ENCODE measurements at regions of chr5 and their contacts with region 1.

Region 1: GRCh38 chr5:132064738-132065331 is 4.4 kb downstream of the IL3 start:
- DNase-seq: peak; percentile 70 to 81 (median 73)
- H3K4me3 ChIP-seq: no peak overlapping the region
- H3K27ac ChIP-seq: no peak overlapping the region
- H3K4me1 ChIP-seq: peaks cover 0 to 11% (median 2%) of the 10 kb centered on the region in 4 experiments
- H3K27me3 ChIP-seq: peaks cover 0 to 3% (median 0%) of the 10 kb centered on the region in 5 experiments

Region 2: DNA sequence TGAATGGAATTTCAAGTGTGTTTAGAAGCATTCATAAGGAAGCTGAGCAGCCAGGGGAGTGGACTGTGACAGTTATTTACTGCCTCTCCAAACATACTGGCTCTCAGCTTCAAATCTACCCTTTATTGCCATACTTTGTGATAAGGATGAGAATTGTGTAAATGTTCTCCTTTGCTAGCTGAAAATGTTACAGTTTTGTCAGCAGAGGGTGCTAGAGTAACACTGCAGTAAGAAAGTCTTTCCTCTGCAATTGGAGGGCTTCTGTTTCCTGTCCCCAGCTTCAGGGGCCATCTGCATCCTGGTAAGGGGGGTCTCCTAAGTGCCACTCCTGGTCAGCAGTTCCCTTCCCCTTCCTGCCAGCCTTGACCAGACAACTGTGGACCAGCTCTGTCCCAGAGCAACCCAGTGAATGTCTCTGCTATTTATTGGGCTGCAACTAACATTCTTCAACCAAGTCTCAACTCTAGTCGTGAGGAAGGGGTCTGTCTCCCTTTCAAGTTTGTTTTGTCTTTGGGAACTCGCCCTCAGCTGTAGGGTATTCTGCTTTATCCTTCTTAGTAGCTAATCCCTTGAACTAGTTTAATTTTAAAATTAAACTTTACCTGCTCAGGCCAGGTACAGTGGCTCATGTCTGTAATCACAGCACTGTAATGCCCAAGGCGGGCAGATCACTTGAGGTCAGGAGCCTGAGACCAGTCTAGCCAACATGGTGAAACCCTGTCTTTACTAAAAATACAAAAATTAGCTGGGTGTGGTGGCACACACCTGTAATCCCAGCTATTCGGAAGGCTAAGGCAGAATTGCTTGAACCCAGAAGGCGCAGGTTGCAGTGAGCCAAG is 475.1 kb before region 1 on chr5:
- CTCF ChIA-PET with region 1: interaction called, 34 read pairs
- POLR2A ChIA-PET with region 1: no interaction called
- DNase-seq: peak; percentile 72 to 86 (median 84)
- H3K4me3 ChIP-seq: no peak overlapping the region
- H3K27ac ChIP-seq: no peak overlapping the region
- H3K4me1 ChIP-seq: peaks cover 4 to 23% (median 15%) of the 10 kb centered on the region in 4 experiments
- H3K27me3 ChIP-seq: no peaks in the 10 kb centered on the region

Region 3: DNA sequence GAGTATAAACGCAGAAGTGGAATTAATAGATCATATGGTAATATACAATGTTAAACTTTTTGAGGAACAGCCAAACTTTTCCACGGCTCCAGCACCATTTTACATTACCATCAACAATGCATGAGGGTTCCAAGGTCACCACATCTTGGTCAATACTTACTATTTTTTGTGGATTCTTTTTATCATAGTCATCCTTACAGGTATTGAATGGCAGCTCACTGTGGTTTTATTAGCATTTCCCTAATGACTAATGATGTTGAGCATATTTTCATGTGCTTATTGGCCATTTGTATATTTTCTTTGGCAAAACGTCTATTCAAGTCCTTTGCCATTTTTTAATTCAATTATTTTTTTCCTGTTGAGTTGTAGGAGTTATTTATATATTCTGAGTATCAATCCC is 415.7 kb before region 1 on chr5:
- CTCF ChIA-PET with region 1: no interaction called
- POLR2A ChIA-PET with region 1: no interaction called
- DNase-seq: no peak
- H3K4me3 ChIP-seq: no peak overlapping the region
- H3K27ac ChIP-seq: no peak overlapping the region
- H3K4me1 ChIP-seq: no peaks in the 10 kb centered on the region
- H3K27me3 ChIP-seq: no peaks in the 10 kb centered on the region

Region 4: DNA sequence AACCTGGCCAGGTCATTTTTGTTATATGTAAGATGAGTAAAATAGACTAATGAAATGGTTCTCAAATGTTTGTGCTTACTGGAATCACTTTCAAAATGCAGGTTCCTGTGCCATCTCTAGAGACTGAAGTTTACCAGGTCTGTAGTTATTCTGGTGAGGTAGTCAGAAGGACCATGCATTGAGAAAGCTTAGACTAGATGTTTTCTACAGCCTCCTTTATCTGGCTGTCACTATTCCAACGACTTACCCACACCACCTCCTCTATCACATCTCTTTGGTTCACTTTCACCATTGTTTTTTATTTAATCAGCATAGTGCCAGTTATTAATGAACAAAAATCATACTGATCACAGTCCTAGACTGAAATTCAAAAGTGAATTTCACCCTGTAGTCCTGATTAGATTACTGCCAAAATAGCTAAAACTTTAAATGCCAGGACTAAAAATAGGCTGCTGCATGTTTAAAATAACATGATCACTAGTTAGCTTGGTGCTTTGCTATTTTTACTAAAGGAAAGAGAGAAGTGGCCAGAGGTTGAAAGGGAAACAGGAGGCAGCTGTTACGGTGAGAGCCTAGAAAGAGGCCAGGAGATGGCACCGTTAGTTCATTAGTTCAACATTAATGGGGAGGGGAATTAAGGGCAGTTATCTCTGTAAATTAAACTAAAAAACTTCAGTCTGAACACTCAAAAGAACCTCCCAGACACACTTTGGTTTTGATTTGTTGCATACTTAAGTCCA is 254.2 kb before region 1 on chr5:
- CTCF ChIA-PET with region 1: interaction called, 13 read pairs
- POLR2A ChIA-PET with region 1: no interaction called
- DNase-seq: peak; percentile 53 to 79 (median 76)
- H3K4me3 ChIP-seq: no peak overlapping the region
- H3K27ac ChIP-seq: no peak overlapping the region
- H3K4me1 ChIP-seq: peaks cover 0 to 5% (median 2%) of the 10 kb centered on the region in 4 experiments
- H3K27me3 ChIP-seq: no peaks in the 10 kb centered on the region

Region 5: DNA sequence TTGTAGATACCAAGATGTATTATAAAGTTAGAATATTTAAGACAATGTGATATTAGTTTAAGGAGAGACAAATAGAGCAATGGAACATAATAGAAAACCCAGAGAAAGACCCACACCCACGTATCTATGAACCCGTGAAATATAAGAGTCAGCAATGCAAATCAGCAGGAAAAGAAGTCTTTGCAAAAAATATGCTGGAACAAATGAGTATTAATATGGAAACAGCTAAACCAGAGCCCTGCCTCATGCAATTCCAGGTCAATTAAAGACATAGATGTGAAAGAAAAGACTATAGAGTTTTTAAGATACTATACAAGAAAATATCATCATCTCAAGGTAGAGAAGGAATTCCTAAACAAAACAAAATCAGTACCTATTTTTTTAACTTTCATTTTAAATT is 27.5 kb before region 1 on chr5:
- CTCF ChIA-PET with region 1: no interaction called
- POLR2A ChIA-PET with region 1: no interaction called
- DNase-seq: no peak
- H3K4me3 ChIP-seq: no peak overlapping the region
- H3K27ac ChIP-seq: no peak overlapping the region
- H3K4me1 ChIP-seq: no peaks in the 10 kb centered on the region
- H3K27me3 ChIP-seq: no peaks in the 10 kb centered on the region

Region 6: GRCh38 chr5:132050136-132050535 is 14.7 kb before region 1 on chr5:
- CTCF ChIA-PET with region 1: interaction called, 11 read pairs
- POLR2A ChIA-PET with region 1: no interaction called
- DNase-seq: peak in 2 of 3 donors; percentile 83 to 88
- H3K4me3 ChIP-seq: no peak overlapping the region
- H3K27ac ChIP-seq: no peak overlapping the region
- H3K4me1 ChIP-seq: peaks cover 0 to 22% (median 16%) of the 10 kb centered on the region in 4 experiments
- H3K27me3 ChIP-seq: no peaks in the 10 kb centered on the region

Region 7: DNA sequence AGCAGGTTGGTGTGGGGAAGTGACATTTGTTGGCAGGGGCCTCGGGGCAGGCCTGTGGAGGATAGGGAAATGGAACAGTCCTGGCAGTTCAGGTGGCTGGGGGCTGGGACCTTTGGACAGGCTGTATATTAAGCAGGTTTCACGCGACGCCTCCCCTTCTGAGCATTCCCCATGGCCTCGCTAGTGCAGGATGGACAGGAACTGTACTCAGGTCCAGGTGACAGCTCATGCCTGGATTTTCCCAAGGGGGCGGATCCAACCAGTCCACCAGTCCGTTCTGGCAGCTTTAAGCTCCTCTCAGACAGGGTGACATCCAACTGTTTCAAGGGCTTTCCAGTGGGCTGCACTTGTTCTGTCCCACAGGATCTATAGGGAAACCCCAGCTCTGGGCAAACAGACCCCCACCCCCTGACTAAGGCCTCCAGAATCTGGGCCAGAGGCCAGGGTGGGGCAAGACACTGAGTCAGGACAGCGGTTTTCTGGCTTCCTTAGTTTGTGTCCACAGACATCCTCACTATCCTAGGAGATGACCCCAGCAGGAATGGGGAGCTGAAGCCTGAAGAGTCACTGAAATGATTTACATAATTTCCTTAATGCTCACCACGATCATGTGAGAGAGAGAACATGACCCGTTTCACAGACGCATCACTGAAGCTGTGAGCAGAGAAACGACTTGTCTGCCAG is 29.7 kb after region 1 on chr5:
- CTCF ChIA-PET with region 1: interaction called, 16 read pairs
- POLR2A ChIA-PET with region 1: no interaction called
- DNase-seq: peak in 1 of 3 donors; percentile 38
- H3K4me3 ChIP-seq: no peak overlapping the region
- H3K27ac ChIP-seq: no peak overlapping the region
- H3K4me1 ChIP-seq: peaks cover 5 to 48% (median 26%) of the 10 kb centered on the region in 4 experiments
- H3K27me3 ChIP-seq: no peaks in the 10 kb centered on the region

Region 8: GRCh38 chr5:132134384-132134783 is 69.5 kb after region 1 on chr5:
- CTCF ChIA-PET with region 1: interaction called, 49 read pairs
- POLR2A ChIA-PET with region 1: no interaction called
- DNase-seq: peak; percentile 39 to 51 (median 46)
- H3K4me3 ChIP-seq: no peak overlapping the region
- H3K27ac ChIP-seq: no peak overlapping the region
- H3K4me1 ChIP-seq: no peaks in the 10 kb centered on the region
- H3K27me3 ChIP-seq: no peaks in the 10 kb centered on the region

Region 9: GRCh38 chr5:132260714-132261551 is 196.1 kb after region 1 on chr5:
- CTCF ChIA-PET with region 1: no interaction called
- POLR2A ChIA-PET with region 1: no interaction called
- DNase-seq: peak; percentile 72 to 91 (median 89)
- H3K4me3 ChIP-seq: peak overlapping the region in 1 of 7 experiments; percentile 1
- H3K27ac ChIP-seq: no peak overlapping the region
- H3K4me1 ChIP-seq: peaks cover 2 to 54% (median 40%) of the 10 kb centered on the region in 4 experiments
- H3K27me3 ChIP-seq: peaks cover 0 to 20% (median 12%) of the 10 kb centered on the region in 5 experiments

Measured in common myeloid progenitor, CD34-positive (primary cell).